GM10248 (cell line): ENCODE measurements at regions of chr17 and their contacts with region 1.

Region 1: DNA sequence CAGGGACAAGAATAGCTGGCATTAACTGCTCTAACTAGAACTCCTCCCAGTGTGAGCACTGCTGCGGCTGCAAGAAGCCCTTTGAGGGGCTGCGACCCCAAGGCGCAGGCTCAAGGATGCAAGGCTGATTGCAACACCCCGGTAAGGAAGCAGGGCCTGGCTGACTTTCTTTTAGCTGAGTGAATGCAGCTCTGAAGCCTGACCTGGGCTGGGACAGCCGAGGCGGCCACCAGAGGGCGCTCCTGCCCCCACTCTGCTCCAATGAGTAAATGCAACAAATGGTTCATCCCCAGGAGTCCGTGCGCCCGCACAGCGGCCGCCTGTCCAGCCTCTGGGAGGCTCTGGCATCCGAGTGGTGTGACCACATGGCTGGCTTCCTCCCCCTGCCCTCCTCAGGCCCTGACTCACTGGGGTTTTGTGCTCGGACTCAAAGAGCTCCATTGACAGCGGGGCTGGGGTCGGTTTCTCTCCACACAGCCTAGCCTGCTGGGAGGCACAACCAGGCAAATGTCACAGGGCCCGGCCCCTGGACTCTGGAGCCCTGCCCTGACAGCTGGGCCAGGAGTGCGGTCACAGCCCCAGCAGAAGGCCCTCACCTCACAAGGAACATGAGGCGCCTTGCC is at the start of gene SMIM5:
- DNase-seq: peak; percentile 93
- CTCF ChIP-seq: peak; percentile 93

Region 2: DNA sequence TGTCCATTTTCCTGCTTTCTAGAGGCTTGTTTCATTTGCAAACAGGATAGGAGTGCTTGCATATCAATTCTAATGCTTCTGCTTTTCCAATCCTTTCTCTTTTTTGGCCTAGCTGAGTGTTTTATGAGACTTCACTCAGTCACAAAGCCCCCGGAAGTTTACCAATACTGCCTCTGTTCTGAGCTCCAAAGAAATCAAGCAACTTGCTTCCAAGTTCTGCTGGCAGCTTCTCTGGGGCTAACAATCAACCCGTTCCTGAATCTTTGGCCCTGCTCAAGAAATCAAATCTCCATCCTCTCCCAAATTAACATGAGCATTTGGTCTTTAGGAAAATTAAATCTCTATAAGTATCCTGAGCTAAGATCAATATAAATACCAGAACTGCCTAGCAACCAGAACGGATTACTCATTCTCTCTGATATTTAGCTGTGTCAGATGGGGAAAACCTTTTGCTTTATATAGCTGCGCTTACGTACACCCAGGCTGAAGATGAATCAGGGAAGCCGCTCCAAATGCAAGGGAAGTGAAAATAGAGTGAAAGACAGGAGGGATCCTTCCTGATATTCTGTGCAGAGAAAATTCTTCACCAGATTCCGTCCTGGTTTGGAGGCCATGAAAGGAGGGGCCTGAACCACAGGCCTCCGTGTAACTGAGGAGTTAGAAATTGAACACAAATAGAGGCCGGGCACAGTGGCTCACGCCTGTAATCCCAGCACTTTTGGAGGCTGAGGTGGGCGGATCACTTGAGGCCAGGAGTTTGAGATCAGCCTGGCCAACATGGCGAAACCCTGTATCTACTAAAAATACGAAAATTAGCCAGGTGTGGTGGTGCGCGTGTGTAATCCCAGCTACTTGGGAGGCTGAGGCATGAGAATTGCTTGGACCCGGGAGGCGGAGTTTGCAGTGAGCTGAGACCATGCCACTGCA is 204.2 kb before region 1 on chr17:
- CTCF ChIA-PET with region 1: interaction called, 21 read pairs
- POLR2A ChIA-PET with region 1: no interaction called
- DNase-seq: no peak
- CTCF ChIP-seq: no peak

Region 3: DNA sequence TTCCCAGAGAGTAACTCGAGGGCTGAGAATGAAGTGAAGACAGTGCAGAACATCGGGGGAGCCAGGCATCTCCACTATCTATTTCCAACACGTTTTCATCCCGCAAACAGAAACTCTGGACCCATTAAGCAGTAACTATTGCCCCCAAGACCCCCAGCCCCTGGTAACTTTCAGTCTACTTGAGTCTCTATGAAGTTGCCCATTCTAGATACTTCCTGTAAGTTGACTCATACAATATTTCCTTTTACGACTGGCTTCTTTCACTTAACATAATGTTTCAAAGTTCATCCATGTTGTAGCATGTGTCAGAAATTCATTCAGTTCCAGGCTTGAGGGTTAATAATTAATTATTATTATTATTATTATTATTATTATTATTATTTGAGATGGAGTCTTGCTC is 25.9 kb before region 1 on chr17:
- CTCF ChIA-PET with region 1: interaction called, 76 read pairs
- POLR2A ChIA-PET with region 1: no interaction called
- DNase-seq: no peak
- CTCF ChIP-seq: no peak

Region 4: GRCh38 chr17:75652915-75653549 is 20.1 kb after region 1 on chr17:
- CTCF ChIA-PET with region 1: interaction called, 463 read pairs
- POLR2A ChIA-PET with region 1: no interaction called
- DNase-seq: peak; percentile 58
- CTCF ChIP-seq: peak; percentile 69

Region 5: DNA sequence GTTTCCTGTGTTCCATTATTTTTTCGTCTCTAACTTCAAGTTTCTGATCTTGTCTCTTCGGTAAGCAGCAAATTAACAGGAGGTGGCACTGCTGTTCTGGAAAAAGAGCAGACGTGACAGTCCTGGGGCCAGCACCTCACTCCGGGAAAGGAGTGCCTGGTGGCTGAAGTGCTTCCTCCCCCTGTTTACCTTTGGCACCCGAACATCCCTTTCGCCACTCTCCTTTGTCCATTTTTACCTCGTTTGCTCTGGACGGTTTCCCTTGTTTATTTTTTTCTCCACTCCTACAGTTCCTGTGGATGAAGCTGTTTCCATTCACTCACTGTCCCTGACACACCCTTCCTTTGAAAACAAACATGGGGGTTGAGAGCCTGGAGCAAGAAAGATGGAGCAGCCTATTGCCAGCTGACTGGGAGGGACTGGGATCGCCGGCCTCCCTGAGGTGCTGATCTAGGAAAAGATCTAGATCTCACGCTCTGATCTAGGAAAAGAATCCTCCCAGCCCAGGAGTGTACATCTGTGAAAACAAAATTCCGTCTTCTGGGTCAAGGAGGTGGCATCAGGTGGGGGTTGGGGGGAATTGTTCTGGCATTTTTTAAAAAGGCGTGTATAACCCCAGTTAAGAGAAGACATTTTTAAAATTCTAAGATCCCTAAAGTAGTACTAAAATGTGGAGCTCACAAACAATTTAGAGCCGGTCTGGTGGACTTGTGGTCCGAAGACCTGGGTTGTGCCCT is 46.9 kb after region 1 on chr17:
- CTCF ChIA-PET with region 1: interaction called, 29 read pairs
- POLR2A ChIA-PET with region 1: no interaction called
- DNase-seq: no peak
- CTCF ChIP-seq: no peak

Region 6: GRCh38 chr17:75731716-75732498 is 98.9 kb after region 1 on chr17:
- CTCF ChIA-PET with region 1: interaction called, 22 read pairs
- POLR2A ChIA-PET with region 1: no interaction called
- DNase-seq: no peak
- CTCF ChIP-seq: no peak